Colonic mucosa (tissue), 4 donors: ENCODE measurements at regions of chr5 and their contacts with region 1.

Region 1: GRCh38 chr5:42994246-42995151 is 45.6 kb downstream of the ANXA2R start:
- DNase-seq: peak; percentile 90
- H3K4me3 ChIP-seq: peak overlapping the region; percentile 25
- H3K27ac ChIP-seq: peak overlapping the region; percentile 83
- H3K4me1 ChIP-seq: no peaks in the 10 kb centered on the region
- H3K27me3 ChIP-seq: peaks cover 20% of the 10 kb centered on the region
- CTCF ChIP-seq: peak; percentile 89

Region 2: DNA sequence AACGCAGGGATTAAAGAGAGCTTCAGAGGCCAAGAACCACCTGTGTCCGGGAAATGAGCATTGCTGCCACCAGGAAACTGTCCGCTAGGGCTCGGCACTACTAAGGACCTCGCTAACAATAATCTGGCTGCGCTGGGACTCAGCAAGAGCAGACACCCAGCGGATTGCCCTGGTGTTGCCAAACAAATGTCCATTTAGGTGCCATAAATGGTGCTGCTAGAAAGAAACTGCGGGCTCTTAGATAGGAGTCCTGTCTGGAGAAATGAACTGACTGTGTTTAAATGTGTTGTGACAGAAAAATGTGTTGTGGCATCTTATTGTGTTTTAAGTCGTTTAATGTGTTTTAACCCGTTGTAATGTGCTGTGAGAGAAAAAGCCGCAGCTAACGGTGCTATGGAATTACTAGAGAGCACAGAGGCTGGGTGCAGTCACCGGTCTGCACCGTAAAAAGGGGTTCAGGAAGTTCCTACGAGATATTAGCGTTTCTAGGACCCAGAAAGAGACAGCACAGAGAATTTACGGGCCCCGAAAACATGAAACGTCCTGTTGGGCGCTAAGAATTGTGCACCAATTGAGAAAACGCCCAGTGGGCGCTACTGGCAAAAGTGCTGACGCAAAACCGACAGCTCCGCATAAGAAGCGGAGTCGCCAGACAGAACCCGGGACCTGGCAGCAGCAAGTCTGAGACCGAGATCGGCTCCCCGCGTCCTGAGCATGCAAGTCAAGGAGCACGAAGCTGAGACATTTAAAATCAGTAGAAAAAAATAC is 45.0 kb before region 1 on chr5:
- intact Hi-C with region 1: loop called (anchors 2 kb)
- DNase-seq: peak; percentile 64
- H3K4me3 ChIP-seq: peak overlapping the region; percentile 14
- H3K27ac ChIP-seq: peak overlapping the region; percentile 82
- H3K4me1 ChIP-seq: peaks cover 10% of the 10 kb centered on the region
- H3K27me3 ChIP-seq: peaks cover 20% of the 10 kb centered on the region
- CTCF ChIP-seq: peak; percentile 38

Region 3: DNA sequence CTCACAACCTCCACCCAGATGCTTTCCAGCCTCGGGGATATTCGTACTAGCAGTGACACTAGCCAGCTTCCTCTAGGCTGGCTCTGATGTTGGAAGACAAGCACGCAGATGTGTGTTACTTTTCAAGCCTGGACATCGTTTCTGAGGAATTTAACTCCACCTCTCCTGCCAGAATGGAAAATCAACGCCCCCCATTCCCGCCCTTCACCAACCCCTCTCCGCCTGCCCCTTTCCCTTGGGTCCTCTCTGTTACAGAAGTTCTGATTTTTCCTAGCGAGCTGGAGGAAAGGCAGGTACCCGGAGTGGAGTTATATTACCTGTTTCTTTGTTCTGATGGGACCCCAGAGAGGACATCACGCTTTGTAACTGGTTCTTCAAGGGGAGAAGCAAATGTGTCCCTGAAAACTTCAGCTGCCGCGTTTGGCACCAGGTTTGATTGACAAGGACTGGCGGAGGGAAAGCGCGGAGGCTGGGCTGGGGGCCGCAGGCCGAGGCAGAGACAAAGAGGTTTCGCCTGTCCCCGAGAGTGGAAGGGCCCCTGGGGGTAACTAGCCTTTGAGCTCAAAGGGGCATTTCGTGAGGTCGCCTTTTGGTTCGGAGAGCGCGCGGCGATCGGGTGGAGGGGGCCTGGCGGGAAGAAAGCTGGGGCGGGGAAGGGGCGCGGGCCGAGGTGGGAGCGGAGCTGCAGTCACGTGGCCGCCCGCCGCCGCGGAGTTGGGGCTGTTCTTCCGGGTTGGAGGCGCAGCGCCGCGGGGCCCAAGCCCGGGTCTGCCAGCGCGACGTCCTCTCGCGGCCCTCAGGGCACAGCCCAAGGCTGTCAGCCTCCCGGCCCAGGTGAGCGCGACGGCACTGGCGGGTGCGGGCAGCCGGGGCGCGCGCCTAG is 608.2 kb after region 1 on chr5 and contains the start of gene NNT:
- intact Hi-C with region 1: no loop called
- DNase-seq: peak; percentile 85
- H3K4me3 ChIP-seq: peak within 1 kb of the TSS; percentile 67
- H3K27ac ChIP-seq: peak within 1 kb of the TSS; percentile 77
- H3K4me1 ChIP-seq: peaks cover 4% of the 10 kb centered on the region
- H3K27me3 ChIP-seq: no peaks in the 10 kb centered on the region
- CTCF ChIP-seq: no peak
- total RNA-seq, gene NNT: 81.3 to 148 TPM